CD4-positive, alpha-beta memory T cell (primary cell): ENCODE measurements at regions of chr1 and their contacts with region 1.

Region 1: GRCh38 chr1:211680752-211681327 is 5.4 kb upstream of the NEK2 start:
- DNase-seq: peak; percentile 76 to 83 (median 82)
- H3K4me3 ChIP-seq: no peak overlapping the region
- H3K4me3 Mint-ChIP-seq: peak overlapping the region in 4 of 8 donors; percentile 0 to 56 (median 17)
- H3K27ac ChIP-seq: peak overlapping the region; percentile 61
- H3K27ac Mint-ChIP-seq: peak overlapping the region; percentile 77 to 98 (median 92)
- H3K4me1 ChIP-seq: peaks cover 15% of the 10 kb centered on the region
- H3K4me1 Mint-ChIP-seq: peaks cover 9 to 26% (median 12%) of the 10 kb centered on the region in 4 donors
- H3K27me3 ChIP-seq: no peaks in the 10 kb centered on the region
- H3K27me3 Mint-ChIP-seq: no peaks in the 10 kb centered on the region

Region 2: GRCh38 chr1:212012034-212012740 is 331.3 kb after region 1 on chr1:
- CTCF ChIA-PET with region 1: interaction called, 10 read pairs
- POLR2A ChIA-PET with region 1: no interaction called
- intact Hi-C with region 1: loop called (anchors 1 kb)
- DNase-seq: peak; percentile 42 to 66 (median 53)
- H3K4me3 ChIP-seq: no peak overlapping the region
- H3K4me3 Mint-ChIP-seq: no peak overlapping the region
- H3K27ac ChIP-seq: no peak overlapping the region
- H3K27ac Mint-ChIP-seq: peak overlapping the region in 1 of 7 donors; percentile 3
- H3K4me1 ChIP-seq: no peaks in the 10 kb centered on the region
- H3K4me1 Mint-ChIP-seq: peaks cover 0 to 7% (median 4%) of the 10 kb centered on the region in 4 donors
- H3K27me3 ChIP-seq: no peaks in the 10 kb centered on the region
- H3K27me3 Mint-ChIP-seq: no peaks in the 10 kb centered on the region